K562 (cell line): ENCODE measurements at regions of chr2 and their contacts with region 1.

Region 1: GRCh38 chr2:226813148-226813701 is 13.6 kb upstream of the IRS1 start:
- DNase-seq: peak in 1 of 4 experiments; percentile 20
- ATAC-seq: peak; percentile 72
- H3K4me3 ChIP-seq: no peak overlapping the region
- H3K27ac ChIP-seq: no peak overlapping the region
- H3K4me1 ChIP-seq: no peaks in the 10 kb centered on the region
- H3K27me3 ChIP-seq: 0 out of 5 replicates have a peak, but pooled peaks cover 0 to 4% of the 10 kb centered on the region in 2 experiments
- CTCF ChIP-seq: peak; percentile 50 to 64 (median 54)
- EP300 ChIP-seq: no peak
- POLR2A ChIP-seq: no peak
- RAD21 ChIP-seq: peak; percentile 49 to 76

Region 2: DNA sequence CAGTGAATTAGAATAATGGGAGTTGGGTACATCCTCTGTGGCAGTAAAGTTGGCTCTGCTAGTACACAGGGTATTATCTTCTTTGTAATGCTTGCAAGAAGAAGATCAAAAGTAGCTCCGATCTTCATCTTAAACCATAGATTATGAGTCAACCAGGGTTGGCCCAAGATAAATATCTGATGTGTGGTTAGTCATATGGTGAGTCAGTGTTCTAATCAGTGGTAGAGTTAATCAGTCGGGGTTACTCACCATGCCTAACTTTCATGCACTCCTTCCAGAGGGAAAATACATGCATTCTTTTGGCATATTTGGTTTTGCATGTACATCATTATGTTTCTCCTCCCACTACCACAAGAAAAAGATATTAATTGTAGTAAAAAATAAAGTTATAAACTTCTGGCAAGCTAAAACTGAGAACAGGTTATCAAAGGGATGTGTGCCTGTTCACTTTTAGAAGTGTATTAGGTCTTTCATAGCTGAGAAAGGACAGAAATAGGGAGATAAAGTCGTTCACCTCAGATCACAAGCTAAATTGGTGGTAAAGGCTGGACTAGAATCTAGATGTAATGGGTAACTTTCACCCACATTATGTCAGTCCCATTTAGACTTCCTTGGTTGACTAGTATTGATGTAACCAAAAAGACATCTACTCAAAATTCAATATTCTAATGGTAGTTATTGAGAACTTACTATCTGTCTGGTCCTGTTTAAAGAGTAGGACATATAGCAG is 698.0 kb before region 1 on chr2:
- CTCF ChIA-PET with region 1: no interaction called
- POLR2A ChIA-PET with region 1: no interaction called
- in situ Hi-C with region 1: no loop called
- intact Hi-C with region 1: no loop called
- DNase-seq: no peak
- ATAC-seq: no peak
- H3K4me3 ChIP-seq: no peak overlapping the region
- H3K27ac ChIP-seq: no peak overlapping the region
- H3K4me1 ChIP-seq: no peaks in the 10 kb centered on the region
- H3K27me3 ChIP-seq: no peaks in the 10 kb centered on the region
- CTCF ChIP-seq: no peak
- EP300 ChIP-seq: no peak
- POLR2A ChIP-seq: no peak
- RAD21 ChIP-seq: no peak

Region 3: DNA sequence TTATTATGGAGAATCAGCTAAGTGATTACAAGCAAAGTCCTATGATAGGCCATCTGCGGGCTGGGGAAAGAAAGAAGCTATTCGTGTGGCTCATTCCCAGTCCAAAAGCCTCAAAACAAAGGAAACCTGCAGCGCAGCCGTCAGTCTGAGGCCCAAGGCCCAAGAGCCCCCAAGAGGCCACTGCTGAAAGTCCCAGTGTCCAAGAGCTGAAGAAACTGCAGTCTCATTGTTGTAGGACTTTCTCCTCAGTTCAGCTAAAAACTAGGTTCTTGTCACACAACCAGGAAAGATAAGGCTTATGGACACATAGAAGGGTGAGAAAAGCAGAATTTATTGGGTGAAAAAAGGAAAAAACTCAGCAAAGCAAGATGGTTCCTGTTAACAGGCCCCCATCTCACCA is 165.8 kb after region 1 on chr2:
- CTCF ChIA-PET with region 1: interaction called, 19 read pairs
- POLR2A ChIA-PET with region 1: no interaction called
- in situ Hi-C with region 1: no loop called
- intact Hi-C with region 1: loop called (anchors 1 kb)
- DNase-seq: peak; percentile 17 to 84 (median 42)
- ATAC-seq: peak; percentile 94
- H3K4me3 ChIP-seq: no peak overlapping the region
- H3K27ac ChIP-seq: peak overlapping the region; percentile 76
- H3K4me1 ChIP-seq: peaks cover 11 to 46% of the 10 kb centered on the region in 2 experiments
- H3K27me3 ChIP-seq: no peaks in the 10 kb centered on the region
- CTCF ChIP-seq: peak; percentile 58 to 69 (median 62)
- EP300 ChIP-seq: peak; percentile 26; the same call in 1 of the 2 replicates
- POLR2A ChIP-seq: no peak
- RAD21 ChIP-seq: peak; percentile 26 to 49; a peak in 3 of 4 replicates

Region 4: GRCh38 chr2:226984750-226985582 is 171.7 kb after region 1 on chr2:
- CTCF ChIA-PET with region 1: interaction called, 19 read pairs
- POLR2A ChIA-PET with region 1: no interaction called
- in situ Hi-C with region 1: loop called (anchors 5 kb)
- intact Hi-C with region 1: loop called (anchors 1 kb)
- DNase-seq: peak; percentile 17 to 65 (median 31)
- ATAC-seq: peak; percentile 90
- H3K4me3 ChIP-seq: no peak overlapping the region
- H3K27ac ChIP-seq: peak overlapping the region; percentile 41; the same call in 2 of the 3 replicates
- H3K4me1 ChIP-seq: peaks cover 0 to 21% of the 10 kb centered on the region in 2 experiments; a peak in 3 of 5 replicates
- H3K27me3 ChIP-seq: no peaks in the 10 kb centered on the region
- CTCF ChIP-seq: peak; percentile 42 to 70 (median 50); a peak in 4 of 6 replicates
- EP300 ChIP-seq: no peak
- POLR2A ChIP-seq: no peak
- RAD21 ChIP-seq: peak; percentile 64 to 71